ENCODE measurements at regions of chr1 and their contacts with region 1.

Region 1: GRCh38 chr1:225474986-225475820 is 47.4 kb upstream of the LBR start:
- H3K4me3 Mint-ChIP-seq: no peak overlapping the region
- H3K27ac Mint-ChIP-seq: peak overlapping the region; percentile 65
- H3K4me1 Mint-ChIP-seq: peaks cover 26% of the 10 kb centered on the region
- H3K27me3 Mint-ChIP-seq: peaks cover 9% of the 10 kb centered on the region

Region 2: DNA sequence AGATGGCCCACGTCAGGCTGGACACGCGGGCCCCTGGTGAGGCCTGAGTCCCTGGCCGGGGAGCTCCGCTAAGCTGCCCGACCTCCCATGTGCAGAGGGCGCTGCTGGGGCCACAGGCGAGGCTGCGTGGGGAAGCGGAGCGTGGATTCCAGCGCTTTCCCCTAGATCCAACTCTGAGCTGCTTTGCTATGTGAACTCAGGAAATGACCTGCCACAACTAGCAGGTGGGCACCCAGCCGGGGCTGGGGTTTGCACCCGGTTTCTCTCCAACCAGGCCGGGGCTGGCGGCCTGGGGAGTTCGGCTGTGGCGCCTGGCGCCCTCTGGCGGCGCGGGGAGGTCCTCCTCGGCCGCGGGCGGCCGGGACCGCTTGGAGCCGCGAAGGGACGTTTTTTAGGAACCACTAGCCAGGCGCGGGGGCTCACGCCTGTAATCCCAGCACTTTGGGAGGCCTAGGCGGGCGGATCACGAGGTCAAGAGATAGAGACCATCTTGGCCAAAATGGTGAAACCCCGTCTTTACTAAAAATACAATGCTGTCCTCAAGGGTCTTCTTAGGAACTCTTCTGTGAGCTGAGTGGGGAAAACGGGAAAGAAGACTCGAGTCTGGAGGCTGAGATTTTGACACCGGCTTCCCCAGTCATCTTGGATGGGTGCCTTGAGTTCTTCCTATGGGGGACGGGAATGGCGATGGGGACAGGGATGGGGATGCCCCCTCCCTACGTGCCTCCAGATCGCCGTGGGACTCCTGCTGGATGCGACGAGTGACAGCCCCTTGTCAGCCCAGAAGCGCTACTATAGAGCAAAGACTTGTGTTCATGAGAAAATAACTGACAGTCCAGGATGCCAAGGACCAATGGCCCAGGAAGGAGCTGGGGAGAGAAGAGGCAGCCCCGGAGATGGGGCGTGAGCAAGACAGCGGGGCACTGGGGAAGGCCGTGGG is 436.3 kb after region 1 on chr1:
- intact Hi-C with region 1: loop called (anchors 1 kb)
- H3K4me3 Mint-ChIP-seq: no peak overlapping the region
- H3K27ac Mint-ChIP-seq: no peak overlapping the region
- H3K4me1 Mint-ChIP-seq: no peaks in the 10 kb centered on the region
- H3K27me3 Mint-ChIP-seq: peaks cover 4% of the 10 kb centered on the region

Measured in dendritic cell treated with granulocyte-macrophage colony-stimulating factor and Interleukin-4, amounts not matched to agents 40 ng/mL and 50 ng/mL, for 4 days (primary cell).